CD14-positive monocyte (primary cell): ENCODE measurements at regions of chr15 and their contacts with region 1.

Region 1: DNA sequence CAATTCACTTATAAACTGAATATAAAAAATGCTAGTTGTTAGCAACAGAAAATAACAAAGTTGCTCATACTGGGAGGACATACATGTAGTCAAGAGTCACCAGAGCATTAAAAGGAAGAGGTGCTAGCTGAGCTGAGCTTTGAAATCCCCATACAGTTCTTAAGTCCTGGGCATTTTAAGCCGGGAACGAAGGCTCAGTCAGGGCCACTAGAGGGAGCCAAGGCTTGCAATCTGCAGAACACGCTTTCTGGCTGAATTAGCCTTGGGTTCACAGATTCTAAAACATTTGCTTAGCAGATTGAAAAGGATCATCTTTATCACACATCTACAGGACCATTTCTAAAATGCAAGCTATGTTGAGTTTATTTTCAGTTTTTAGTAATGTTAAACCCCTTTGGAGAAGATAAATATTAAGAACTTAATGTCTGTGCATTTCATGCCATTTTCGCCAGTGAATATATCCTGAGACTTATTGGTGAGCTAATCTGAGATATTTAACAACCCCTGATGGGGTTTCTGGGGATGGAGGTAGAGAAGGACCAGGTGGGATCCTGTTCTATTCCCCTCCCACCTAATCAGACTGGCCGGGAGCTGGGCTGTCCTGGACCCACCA is 26.3 kb upstream of the MNS1 start:
- DNase-seq: peak; percentile 17 to 41 (median 37)
- H3K4me3 ChIP-seq: no peak overlapping the region
- H3K4me3 Mint-ChIP-seq: no peak overlapping the region
- H3K27ac ChIP-seq: no peak overlapping the region
- H3K27ac Mint-ChIP-seq: no peak overlapping the region
- H3K4me1 ChIP-seq: no peaks in the 10 kb centered on the region
- H3K4me1 Mint-ChIP-seq: no peaks in the 10 kb centered on the region
- H3K27me3 ChIP-seq: no peaks in the 10 kb centered on the region
- H3K27me3 Mint-ChIP-seq: peaks cover 0 to 2% (median 1%) of the 10 kb centered on the region in 3 donors
- CTCF ChIP-seq: peak; percentile 79

Region 2: GRCh38 chr15:57527382-57528091 is 1036.3 kb after region 1 on chr15:
- intact Hi-C with region 1: loop called in 1 of 2 experiments (anchors 10 kb)
- DNase-seq: peak; percentile 13 to 40 (median 16)
- H3K4me3 ChIP-seq: no peak overlapping the region
- H3K4me3 Mint-ChIP-seq: no peak overlapping the region
- H3K27ac ChIP-seq: no peak overlapping the region
- H3K27ac Mint-ChIP-seq: no peak overlapping the region
- H3K4me1 ChIP-seq: no peaks in the 10 kb centered on the region
- H3K4me1 Mint-ChIP-seq: no peaks in the 10 kb centered on the region
- H3K27me3 ChIP-seq: no peaks in the 10 kb centered on the region
- H3K27me3 Mint-ChIP-seq: no peaks in the 10 kb centered on the region
- CTCF ChIP-seq: peak; percentile 64